HEK293 (cell line): ENCODE measurements at regions of chr15 and their contacts with region 1.

Region 1: DNA sequence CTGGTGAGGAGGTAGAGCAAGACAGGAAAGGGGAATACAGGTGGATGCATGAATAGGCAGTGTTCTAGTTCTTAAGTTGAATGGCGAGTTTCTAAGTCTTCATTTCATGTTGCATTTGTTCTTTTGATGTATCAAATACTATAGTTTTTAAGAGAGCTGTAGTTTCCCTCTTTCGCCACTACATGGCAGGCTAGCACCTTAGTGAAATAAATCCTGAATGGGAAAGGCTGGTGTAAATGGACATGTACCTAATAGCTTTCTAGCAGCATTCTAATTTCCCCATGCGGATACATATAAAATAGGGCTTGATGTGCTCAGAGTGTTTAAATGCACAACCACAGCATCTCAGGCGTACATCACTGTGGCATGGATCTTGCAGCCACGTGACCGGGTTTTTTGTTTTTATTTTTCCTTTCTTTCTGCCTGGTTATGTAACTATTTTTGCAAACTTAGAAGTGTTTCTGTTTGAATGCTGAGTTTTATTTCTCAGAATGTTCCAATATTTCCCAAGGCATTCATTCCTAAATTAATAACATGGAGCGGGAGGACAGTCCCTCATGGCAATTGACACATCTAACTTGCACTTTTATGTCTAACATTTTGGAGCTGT is 23.5 kb upstream of the CLN6 start:
- H3K4me3 ChIP-seq: no peak overlapping the region
- H3K27ac ChIP-seq: no peak overlapping the region
- H3K4me1 ChIP-seq: 0 out of 2 replicates have a peak, but pooled peaks cover 2% of the 10 kb centered on the region
- CTCF ChIP-seq: peak; percentile 80

Region 2: GRCh38 chr15:67240235-67241131 is 1012.5 kb before region 1 on chr15:
- CTCF ChIA-PET with region 1: interaction called, 10 read pairs
- POLR2A ChIA-PET with region 1: no interaction called
- H3K4me3 ChIP-seq: no peak overlapping the region
- H3K27ac ChIP-seq: no peak overlapping the region
- H3K4me1 ChIP-seq: peaks cover 22% of the 10 kb centered on the region
- CTCF ChIP-seq: peak; percentile 40

Region 3: GRCh38 chr15:68265081-68265480 is 12.1 kb after region 1 on chr15:
- CTCF ChIA-PET with region 1: interaction called, 15 read pairs
- POLR2A ChIA-PET with region 1: interaction called, 4 read pairs
- H3K4me3 ChIP-seq: no peak overlapping the region
- H3K27ac ChIP-seq: no peak overlapping the region
- H3K4me1 ChIP-seq: no peaks in the 10 kb centered on the region
- CTCF ChIP-seq: no peak

Region 4: DNA sequence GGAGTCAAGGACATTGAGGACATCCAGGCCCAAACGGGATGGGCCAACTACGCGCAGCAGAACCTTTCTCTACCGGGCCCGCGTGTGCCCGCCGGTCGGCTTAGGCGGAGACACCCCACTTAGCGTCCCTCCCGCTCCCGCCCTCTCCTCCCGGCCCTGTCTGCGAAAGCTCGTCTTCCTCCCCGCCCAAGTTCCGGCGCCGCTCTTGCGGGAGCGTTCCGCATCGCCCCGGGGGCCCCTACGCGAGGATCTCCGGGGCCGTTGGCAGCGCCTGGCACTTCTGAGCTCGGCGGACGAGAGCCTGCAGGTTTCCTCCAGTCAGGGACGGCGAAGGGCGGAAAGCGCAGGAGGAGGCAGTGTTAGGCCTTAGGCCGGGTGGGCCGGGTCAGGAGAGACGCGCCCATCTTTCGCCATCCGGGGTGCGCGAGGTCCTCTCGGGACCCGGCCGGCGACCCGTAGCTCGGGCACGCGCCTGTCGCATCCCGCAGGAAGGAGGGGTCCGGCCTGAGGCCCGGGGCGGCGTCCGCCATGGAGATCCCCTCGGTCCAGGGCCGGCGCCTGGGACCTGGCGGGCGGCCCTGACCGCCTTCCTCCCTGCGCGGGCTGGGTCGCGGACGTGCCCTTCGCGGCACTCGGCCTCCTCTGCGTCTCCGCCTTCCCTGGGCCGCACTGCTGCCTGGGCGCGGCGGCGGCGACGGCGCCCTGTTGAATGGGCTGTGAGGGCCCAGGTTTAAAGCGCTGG is 24.7 kb after region 1 on chr15 and contains the start of gene FEM1B:
- CTCF ChIA-PET with region 1: interaction called, 31 read pairs
- POLR2A ChIA-PET with region 1: interaction called, 12 read pairs
- H3K4me3 ChIP-seq: peak within 1 kb of the TSS; percentile 95
- H3K27ac ChIP-seq: peak within 1 kb of the TSS; percentile 97
- H3K4me1 ChIP-seq: peaks cover 13% of the 10 kb centered on the region; the same call in 1 of the 2 replicates
- CTCF ChIP-seq: no peak

Region 5: DNA sequence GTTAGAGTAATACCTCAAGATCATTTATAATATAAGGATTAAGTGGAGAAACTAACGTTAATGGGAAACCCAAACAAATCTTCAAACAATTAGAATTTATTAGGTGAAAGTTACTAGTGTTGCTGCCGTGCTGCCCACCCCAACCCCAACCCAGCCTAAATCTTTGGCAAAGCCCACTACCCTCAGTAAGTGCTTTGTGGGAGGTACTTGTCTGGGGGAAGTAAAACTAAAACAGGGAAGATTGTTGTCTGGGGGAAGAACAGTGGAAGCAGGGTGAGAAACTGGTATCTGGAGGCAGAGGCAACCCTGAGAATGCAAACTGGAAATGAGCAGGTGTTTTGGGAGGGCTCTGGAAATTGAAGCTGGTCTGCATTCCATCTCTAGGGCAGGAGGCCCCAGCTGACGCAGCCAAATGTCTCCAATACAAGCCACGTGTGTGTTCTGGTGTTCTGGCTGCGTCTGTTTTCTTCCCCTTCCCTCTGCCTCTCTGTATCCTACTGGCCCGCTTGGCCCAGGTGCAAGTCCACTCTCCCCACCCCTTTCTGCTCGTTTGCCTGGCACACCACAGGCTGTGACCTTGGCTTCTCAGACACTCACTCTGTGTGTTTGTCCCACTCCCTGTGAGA is 57.3 kb after region 1 on chr15:
- CTCF ChIA-PET with region 1: interaction called, 158 read pairs
- POLR2A ChIA-PET with region 1: interaction called, 9 read pairs
- H3K4me3 ChIP-seq: no peak overlapping the region
- H3K27ac ChIP-seq: no peak overlapping the region
- H3K4me1 ChIP-seq: no peaks in the 10 kb centered on the region
- CTCF ChIP-seq: no peak